ENCODE measurements at regions of chr17 and their contacts with region 1.

Region 1: GRCh38 chr17:50200457-50201275 is 765 bp downstream of the COL1A1 start:
- DNase-seq: peak; percentile 88 to 89
- H3K4me3 ChIP-seq: peak overlapping the region in 1 of 3 donors; percentile 33
- H3K27ac ChIP-seq: peak overlapping the region; percentile 55 to 64 (median 59)
- H3K4me1 ChIP-seq: peaks cover 12 to 29% of the 10 kb centered on the region in 2 donors
- H3K27me3 ChIP-seq: peaks cover 10% of the 10 kb centered on the region
- CTCF ChIP-seq: peak; percentile 98 to 100 (median 100)
- POLR2A ChIP-seq: no peak

Region 2: DNA sequence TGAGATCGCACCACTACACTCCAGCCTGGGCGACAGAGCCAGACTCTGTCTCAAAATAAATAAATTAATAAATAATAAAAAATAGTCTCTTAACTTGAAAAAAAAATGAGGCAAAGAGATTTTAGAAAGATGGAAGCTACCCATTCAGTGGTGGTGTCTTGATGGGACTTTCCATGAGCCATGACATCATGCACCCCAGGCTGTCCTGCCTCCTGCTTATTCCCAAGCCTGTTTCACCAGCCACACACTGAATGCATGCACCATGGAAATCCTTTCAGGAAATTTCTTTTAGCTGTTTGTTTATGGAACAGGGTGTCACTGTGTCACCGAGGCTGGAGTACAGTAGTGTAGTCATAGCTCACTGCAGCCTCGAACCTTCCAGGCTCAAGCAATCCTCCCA is 196.8 kb before region 1 on chr17:
- intact Hi-C with region 1: no loop called
- DNase-seq: no peak
- H3K4me3 ChIP-seq: no peak overlapping the region
- H3K27ac ChIP-seq: no peak overlapping the region
- H3K4me1 ChIP-seq: no peaks in the 10 kb centered on the region
- H3K27me3 ChIP-seq: no peaks in the 10 kb centered on the region
- CTCF ChIP-seq: no peak
- POLR2A ChIP-seq: no peak

Region 3: DNA sequence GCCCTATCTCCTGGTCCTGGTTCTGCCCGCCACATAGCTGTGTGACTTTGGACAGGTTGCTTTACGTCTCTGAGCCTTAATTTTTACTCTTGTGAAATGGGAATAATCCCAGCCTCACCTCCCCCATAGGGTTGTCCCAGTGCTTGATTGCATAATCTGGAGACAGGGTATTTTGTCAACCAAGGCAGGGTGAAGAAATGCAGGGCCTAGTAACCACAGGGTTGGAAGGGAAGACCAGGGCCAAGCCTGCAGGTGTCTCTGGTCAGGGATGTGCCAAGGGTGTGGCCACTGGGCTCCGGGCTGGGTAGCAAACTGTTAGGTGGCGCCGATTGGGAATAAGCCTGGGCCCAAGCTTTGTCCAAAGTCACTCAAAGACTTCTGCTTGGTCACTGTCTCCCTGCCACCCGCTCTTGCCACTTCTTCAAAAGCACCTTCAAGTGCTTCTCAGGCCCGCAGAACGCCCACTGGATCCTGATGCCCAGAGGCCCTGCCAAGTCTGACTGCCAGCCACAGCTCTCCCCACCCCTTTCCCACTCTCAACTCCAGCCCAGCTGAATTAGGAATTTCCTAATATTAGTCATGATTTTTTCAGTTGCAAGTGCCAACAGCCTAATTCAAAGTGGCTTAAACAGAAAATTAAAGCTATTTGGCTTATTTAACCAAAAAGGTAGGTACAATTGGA is 21.3 kb after region 1 on chr17:
- intact Hi-C with region 1: no loop called
- DNase-seq: peak; percentile 90 to 91
- H3K4me3 ChIP-seq: no peak overlapping the region
- H3K27ac ChIP-seq: peak overlapping the region; percentile 22 to 87 (median 74)
- H3K4me1 ChIP-seq: peaks cover 21 to 42% of the 10 kb centered on the region in 2 donors
- H3K27me3 ChIP-seq: no peaks in the 10 kb centered on the region
- CTCF ChIP-seq: no peak
- POLR2A ChIP-seq: no peak

Region 4: DNA sequence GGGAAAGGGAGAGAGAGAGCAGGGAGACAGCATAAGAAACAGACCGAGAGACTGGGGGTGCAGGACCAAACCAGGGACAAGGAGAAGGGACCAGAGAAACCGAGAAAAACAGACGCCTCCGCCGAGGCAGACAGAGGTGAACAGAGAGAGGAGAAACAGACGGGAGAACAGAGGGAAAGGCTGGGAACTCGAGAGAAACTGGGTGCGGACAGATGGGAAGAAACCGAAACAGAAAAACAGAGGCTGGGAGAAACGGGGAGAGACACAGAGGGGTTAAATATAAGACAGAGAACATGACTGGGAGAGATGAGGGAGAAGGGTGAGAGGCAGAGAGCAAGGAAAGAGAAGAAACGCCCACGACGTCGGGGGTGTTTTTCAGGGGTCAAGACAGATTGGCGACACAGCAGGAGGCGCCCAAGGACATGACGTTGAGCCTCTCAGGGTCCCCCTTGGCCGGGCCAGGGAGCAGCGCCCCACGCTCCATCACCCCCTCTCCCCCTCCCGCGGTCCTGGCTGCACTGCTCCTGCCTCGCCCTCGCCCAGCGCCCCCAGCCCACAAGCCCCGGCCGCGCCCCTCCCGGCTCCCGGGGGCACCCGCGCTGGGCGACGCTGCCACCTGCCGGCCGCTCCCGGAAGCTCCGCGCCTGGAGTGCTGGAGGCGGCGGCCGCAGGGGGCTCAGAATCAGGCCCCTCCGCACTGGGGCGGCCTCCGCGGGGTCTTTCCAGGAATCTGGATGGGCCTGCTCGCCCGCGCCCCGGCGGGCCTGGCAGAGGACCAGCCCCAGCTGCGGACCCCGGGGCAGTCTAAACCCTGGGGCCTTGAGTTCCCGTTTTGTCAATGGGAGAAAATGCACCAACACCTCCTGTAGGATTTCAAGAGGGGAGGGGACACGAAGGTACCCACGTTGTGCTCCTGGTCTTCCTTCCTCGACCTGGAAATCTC is 72.3 kb after region 1 on chr17:
- intact Hi-C with region 1: loop called (anchors 2 kb)
- DNase-seq: peak; percentile 14 to 31
- H3K4me3 ChIP-seq: peak overlapping the region in 1 of 3 donors; percentile 36
- H3K27ac ChIP-seq: no peak overlapping the region
- H3K4me1 ChIP-seq: peaks cover 0 to 11% of the 10 kb centered on the region in 2 donors
- H3K27me3 ChIP-seq: peaks cover 6% of the 10 kb centered on the region
- CTCF ChIP-seq: peak in 5 of 6 experiments; percentile 82 to 97 (median 92)
- POLR2A ChIP-seq: no peak

Region 5: DNA sequence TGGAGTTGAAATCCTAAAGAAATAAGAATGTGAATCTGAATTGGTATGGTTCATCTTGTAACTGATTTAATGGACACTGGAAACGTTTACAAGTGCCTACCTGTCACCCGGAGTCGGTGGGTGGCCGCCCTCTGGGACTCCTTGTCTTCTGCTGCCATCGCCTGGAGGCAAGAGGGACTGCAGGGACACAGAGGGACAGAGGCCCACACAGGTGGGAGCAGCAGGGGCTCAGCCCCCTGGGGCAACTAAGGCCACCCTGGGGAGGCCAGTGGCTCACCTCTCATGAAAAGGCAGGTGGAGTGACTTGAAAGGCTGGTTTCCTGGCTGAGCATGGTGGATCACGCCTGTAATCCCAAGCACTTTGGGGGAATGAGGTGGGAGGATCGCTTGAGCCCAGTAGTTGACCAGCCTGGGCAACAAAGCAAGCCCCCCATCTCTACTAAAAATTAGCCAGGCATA is 96.8 kb after region 1 on chr17:
- intact Hi-C with region 1: loop called (anchors 2 kb)
- DNase-seq: peak; percentile 76 to 83
- H3K4me3 ChIP-seq: no peak overlapping the region
- H3K27ac ChIP-seq: no peak overlapping the region
- H3K4me1 ChIP-seq: no peaks in the 10 kb centered on the region
- H3K27me3 ChIP-seq: no peaks in the 10 kb centered on the region
- CTCF ChIP-seq: peak; percentile 79 to 97 (median 92)
- POLR2A ChIP-seq: no peak